Breast epithelium (tissue), 4 donors: ENCODE measurements at regions of chr19 and their contacts with region 1.

Region 1: DNA sequence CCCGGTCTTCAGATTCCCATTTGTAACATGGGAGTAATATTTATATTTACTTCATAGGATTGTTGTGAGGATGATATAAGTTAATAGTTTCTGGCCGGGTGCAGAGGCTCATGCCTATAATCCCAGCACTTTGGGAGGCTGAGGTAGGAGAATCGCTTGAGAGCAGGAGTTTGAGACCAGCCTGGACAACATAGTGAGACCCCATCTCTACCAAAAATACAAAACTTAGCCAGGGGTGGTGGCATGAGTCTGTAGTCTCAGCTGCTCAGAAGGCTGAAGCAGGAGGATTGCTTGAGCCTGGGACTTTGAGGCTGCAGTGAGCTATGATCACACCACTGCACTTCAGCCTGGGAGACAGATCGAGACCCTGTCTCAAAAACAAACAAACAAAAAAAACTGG is 11.2 kb downstream of the CATSPERG start:
- DNase-seq: no peak
- H3K4me3 ChIP-seq: no peak overlapping the region
- H3K27ac ChIP-seq: no peak overlapping the region
- H3K4me1 ChIP-seq: no peaks in the 10 kb centered on the region
- H3K27me3 ChIP-seq: no peaks in the 10 kb centered on the region
- CTCF ChIP-seq: no peak
- POLR2A ChIP-seq: no peak

Region 2: GRCh38 chr19:37779127-37780005 is 567.5 kb before region 1 on chr19 and contains the start of gene ZNF573:
- intact Hi-C with region 1: loop called (anchors 10 kb)
- DNase-seq: peak; percentile 72 to 73
- H3K4me3 ChIP-seq: peak within 1 kb of the TSS; percentile 56 to 89 (median 76)
- H3K27ac ChIP-seq: peak within 1 kb of the TSS; percentile 92 to 95
- H3K4me1 ChIP-seq: no peaks in the 10 kb centered on the region
- H3K27me3 ChIP-seq: no peaks in the 10 kb centered on the region
- CTCF ChIP-seq: no peak
- POLR2A ChIP-seq: no peak
- total RNA-seq, gene ZNF573: 6.2 to 16.7 (median 11.6) TPM

Region 3: DNA sequence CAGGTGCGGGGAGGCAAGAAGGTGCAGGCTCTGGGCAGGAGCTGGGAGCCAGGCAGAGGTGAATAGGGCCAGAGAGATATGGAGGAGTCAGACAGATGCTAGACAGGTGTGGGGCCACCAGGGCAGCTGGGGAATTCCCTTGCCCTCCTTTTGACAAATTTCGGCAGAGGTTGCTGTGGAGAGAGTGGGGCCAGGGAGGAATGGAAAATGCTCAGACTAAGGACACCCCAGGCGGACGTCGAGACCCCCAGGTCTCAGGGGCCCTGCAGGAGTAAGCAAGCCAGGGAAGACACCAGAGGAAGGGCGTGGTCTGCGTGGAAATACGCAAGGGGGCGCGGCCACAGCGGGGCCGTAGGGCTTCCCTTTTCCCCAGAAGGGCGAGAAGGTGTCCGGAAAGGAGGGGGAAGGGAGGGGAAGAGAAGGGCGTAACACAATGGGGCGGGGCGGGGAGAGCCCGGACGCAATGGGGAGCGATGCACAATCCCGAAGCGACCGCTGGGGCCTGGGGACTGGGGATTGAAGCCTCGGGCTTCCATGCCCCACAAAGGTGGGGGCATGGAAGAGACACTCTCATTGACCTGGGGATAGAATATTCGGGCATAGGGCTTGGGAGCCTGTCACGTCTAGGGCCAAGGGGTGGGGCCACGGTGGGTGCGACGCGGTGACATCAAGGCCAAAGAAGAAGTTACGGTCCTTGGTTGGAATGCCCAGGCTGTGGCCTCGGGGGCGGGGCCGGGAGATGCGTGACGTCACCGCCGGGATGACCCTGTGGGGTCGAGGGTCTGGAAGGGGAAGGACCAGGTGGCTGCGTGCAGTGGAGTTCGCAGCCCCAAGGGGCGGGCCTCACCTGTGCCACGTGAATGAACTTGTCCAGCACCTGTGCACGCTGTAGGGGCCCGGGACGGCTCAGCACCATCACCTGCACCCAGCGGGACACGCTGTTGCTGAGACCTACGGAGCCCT is 71.0 kb after region 1 on chr19:
- intact Hi-C with region 1: no loop called
- DNase-seq: no peak
- H3K4me3 ChIP-seq: peak overlapping the region; percentile 15 to 66 (median 48)
- H3K27ac ChIP-seq: no peak overlapping the region
- H3K4me1 ChIP-seq: no peaks in the 10 kb centered on the region
- H3K27me3 ChIP-seq: peaks cover 0 to 1% of the 10 kb centered on the region in 2 donors
- CTCF ChIP-seq: peak in 1 of 3 donors; percentile 10
- POLR2A ChIP-seq: no peak